Tibial artery (tissue), 4 donors: ENCODE measurements at regions of chr10 and their contacts with region 1.

Region 1: GRCh38 chr10:31490858-31491504 is 172.0 kb downstream of the ZEB1 start:
- DNase-seq: no peak
- H3K4me3 ChIP-seq: no peak overlapping the region
- H3K27ac ChIP-seq: no peak overlapping the region
- H3K4me1 ChIP-seq: no peaks in the 10 kb centered on the region
- H3K27me3 ChIP-seq: no peaks in the 10 kb centered on the region
- CTCF ChIP-seq: peak; percentile 34 to 56

Region 2: GRCh38 chr10:30722956-30723620 is 767.9 kb before region 1 on chr10:
- intact Hi-C with region 1: loop called (anchors 5 kb)
- DNase-seq: no peak
- H3K4me3 ChIP-seq: no peak overlapping the region
- H3K27ac ChIP-seq: no peak overlapping the region
- H3K4me1 ChIP-seq: peaks cover 0 to 3% (median 0%) of the 10 kb centered on the region in 4 donors
- H3K27me3 ChIP-seq: no peaks in the 10 kb centered on the region
- CTCF ChIP-seq: no peak

Region 3: GRCh38 chr10:30783939-30784500 is 707.0 kb before region 1 on chr10:
- intact Hi-C with region 1: loop called (anchors 5 kb)
- DNase-seq: peak; percentile 85 to 92
- H3K4me3 ChIP-seq: peak overlapping the region; percentile 74 to 76
- H3K27ac ChIP-seq: peak overlapping the region; percentile 97
- H3K4me1 ChIP-seq: peaks cover 0 to 22% (median 20%) of the 10 kb centered on the region in 4 donors
- H3K27me3 ChIP-seq: no peaks in the 10 kb centered on the region
- CTCF ChIP-seq: peak; percentile 89 to 93